Psoas muscle (tissue), 8 donors: ENCODE measurements at regions of chr4 and their contacts with region 1.

Region 1: GRCh38 chr4:17810260-17811077 is at the starts of genes DCAF16 and NCAPG:
- DNase-seq: peak; percentile 99 to 100
- ATAC-seq: peak; percentile 99 to 100 (median 100)
- H3K4me3 ChIP-seq: peak within 1 kb of the TSS; percentile 88
- H3K27ac ChIP-seq: peak within 1 kb of the TSS; percentile 91
- H3K4me1 ChIP-seq: peaks cover 36% of the 10 kb centered on the region
- H3K27me3 ChIP-seq: no peaks in the 10 kb centered on the region
- CTCF ChIP-seq: no peak
- total RNA-seq, gene DCAF16: 10.4 to 14.8 (median 13.0) TPM
- total RNA-seq, gene NCAPG: 0.30 to 0.44 (median 0.41) TPM

Region 2: GRCh38 chr4:16801356-16801755 is 1009.1 kb before region 1 on chr4:
- intact Hi-C with region 1: no loop called
- DNase-seq: no peak
- ATAC-seq: no peak
- H3K4me3 ChIP-seq: no peak overlapping the region
- H3K27ac ChIP-seq: no peak overlapping the region
- H3K4me1 ChIP-seq: no peaks in the 10 kb centered on the region
- H3K27me3 ChIP-seq: no peaks in the 10 kb centered on the region
- CTCF ChIP-seq: no peak

Region 3: DNA sequence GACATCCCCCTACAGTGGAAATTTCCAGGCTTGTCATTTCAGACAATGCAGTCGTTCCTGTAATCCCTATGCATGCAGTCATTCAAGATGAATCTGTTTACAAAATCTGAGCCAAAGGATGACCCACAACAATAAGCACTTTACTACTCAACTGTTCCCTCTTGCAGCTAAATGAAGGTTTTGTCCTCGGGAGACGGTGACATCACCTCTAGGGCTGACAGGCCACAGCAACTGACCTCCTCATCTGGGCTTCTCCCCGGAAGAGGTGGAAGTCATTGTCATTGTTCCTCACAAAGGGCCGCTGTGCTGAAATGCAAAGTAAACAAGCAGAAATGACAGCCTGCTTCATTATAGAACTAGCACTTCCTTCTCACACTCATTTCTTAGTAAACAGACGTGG is 266.3 kb before region 1 on chr4:
- intact Hi-C with region 1: loop called (anchors 5 kb)
- DNase-seq: no peak
- ATAC-seq: no peak
- H3K4me3 ChIP-seq: no peak overlapping the region
- H3K27ac ChIP-seq: no peak overlapping the region
- H3K4me1 ChIP-seq: no peaks in the 10 kb centered on the region
- H3K27me3 ChIP-seq: no peaks in the 10 kb centered on the region
- CTCF ChIP-seq: no peak

Region 4: GRCh38 chr4:17576932-17577665 is 233.4 kb before region 1 on chr4 and contains the start of gene LAP3:
- intact Hi-C with region 1: loop called in 1 of 2 experiments (anchors 10 kb)
- DNase-seq: peak; percentile 97 to 99
- ATAC-seq: peak; percentile 98 to 99 (median 98)
- H3K4me3 ChIP-seq: peak within 1 kb of the TSS; percentile 78
- H3K27ac ChIP-seq: peak within 1 kb of the TSS; percentile 90
- H3K4me1 ChIP-seq: peaks cover 11% of the 10 kb centered on the region
- H3K27me3 ChIP-seq: no peaks in the 10 kb centered on the region
- CTCF ChIP-seq: no peak
- total RNA-seq, gene LAP3: 52.0 to 81.3 (median 66.2) TPM

Region 5: GRCh38 chr4:17614416-17615299 is 195.8 kb before region 1 on chr4 and contains the start of gene MED28:
- intact Hi-C with region 1: loop called in 1 of 2 experiments (anchors 5 kb)
- DNase-seq: peak; percentile 96 to 98
- ATAC-seq: peak; percentile 88 to 96 (median 92)
- H3K4me3 ChIP-seq: peak within 1 kb of the TSS; percentile 81
- H3K27ac ChIP-seq: peak within 1 kb of the TSS; percentile 90
- H3K4me1 ChIP-seq: peaks cover 46% of the 10 kb centered on the region
- H3K27me3 ChIP-seq: no peaks in the 10 kb centered on the region
- CTCF ChIP-seq: no peak
- total RNA-seq, gene MED28: 27.2 to 58.3 (median 44.0) TPM

Region 6: GRCh38 chr4:17636696-17637622 is 173.5 kb before region 1 on chr4:
- intact Hi-C with region 1: loop called in 1 of 2 experiments (anchors 5 kb)
- DNase-seq: peak; percentile 78 to 89
- ATAC-seq: peak; percentile 81 to 88 (median 84)
- H3K4me3 ChIP-seq: no peak overlapping the region
- H3K27ac ChIP-seq: no peak overlapping the region
- H3K4me1 ChIP-seq: no peaks in the 10 kb centered on the region
- H3K27me3 ChIP-seq: no peaks in the 10 kb centered on the region
- CTCF ChIP-seq: peak; percentile 92

Region 7: DNA sequence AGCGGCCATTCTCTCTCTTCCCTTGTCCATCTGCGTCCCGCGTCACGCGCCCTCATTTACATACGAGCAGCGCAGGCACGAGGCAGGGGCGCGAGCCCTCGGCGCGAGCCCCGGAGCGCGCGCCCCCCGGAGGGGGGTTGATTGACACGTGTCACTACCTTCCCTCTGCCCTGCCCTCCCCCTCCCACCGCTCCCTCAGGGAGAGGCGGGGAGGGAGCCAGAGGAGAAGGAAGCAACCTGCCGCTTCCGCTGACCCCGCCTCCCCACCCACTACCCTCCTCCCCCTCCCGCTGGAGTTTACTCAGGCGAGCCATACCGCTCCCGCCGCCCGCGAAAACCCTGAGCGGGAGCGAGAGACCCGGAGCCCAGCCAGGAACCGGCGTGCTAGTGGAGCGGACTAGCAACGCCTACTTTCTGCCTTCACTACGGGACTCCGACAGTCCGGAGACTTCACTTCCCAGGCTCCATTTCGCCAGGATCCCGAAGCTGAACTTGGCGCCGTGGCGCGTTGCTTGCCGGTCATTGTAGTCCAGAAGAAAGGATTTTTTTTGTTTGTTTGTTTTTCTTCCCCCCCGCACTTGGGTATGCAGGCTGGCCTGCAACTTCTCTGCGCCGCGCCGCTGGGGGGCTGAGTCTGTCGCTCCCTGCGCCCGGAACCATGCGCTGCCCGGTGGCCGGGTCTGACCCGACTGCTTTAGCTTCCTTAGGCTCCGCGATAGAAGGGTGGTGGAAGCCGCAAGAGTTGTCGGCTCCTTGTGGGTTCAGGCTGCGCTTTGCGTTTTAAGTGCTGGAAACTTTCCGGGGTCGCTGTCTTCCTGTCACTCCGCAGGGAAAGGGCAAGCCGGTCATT is 211.5 kb after region 1 on chr4 and contains the start of gene LCORL:
- intact Hi-C with region 1: loop called (anchors 5 kb)
- DNase-seq: peak; percentile 92 to 96
- ATAC-seq: peak; percentile 93 to 95 (median 93)
- H3K4me3 ChIP-seq: peak within 1 kb of the TSS; percentile 92
- H3K27ac ChIP-seq: peak within 1 kb of the TSS; percentile 94
- H3K4me1 ChIP-seq: peaks cover 15% of the 10 kb centered on the region
- H3K27me3 ChIP-seq: no peaks in the 10 kb centered on the region
- CTCF ChIP-seq: peak; percentile 22
- total RNA-seq, gene LCORL: 5.3 to 7.5 (median 7.3) TPM

Region 8: DNA sequence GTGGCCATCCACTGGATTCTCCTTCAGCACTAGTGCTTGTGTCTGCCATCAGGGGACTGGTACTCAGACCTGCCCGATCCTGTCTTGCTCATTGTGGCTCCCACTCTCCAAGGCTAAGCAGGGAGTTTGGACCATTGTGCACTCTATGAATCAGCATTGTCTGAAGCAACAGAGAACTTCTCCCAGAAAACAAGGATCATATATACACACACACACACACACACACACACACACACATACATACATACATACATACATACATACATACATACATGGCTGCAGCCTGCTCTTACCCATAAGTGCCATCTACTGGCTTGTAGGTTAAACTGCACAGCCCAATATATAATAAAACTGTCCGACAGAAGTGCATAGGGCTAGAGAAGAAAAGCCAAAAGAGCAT is 556.4 kb after region 1 on chr4:
- intact Hi-C with region 1: loop called (anchors 10 kb)
- DNase-seq: no peak
- ATAC-seq: no peak
- H3K4me3 ChIP-seq: no peak overlapping the region
- H3K27ac ChIP-seq: no peak overlapping the region
- H3K4me1 ChIP-seq: no peaks in the 10 kb centered on the region
- H3K27me3 ChIP-seq: no peaks in the 10 kb centered on the region
- CTCF ChIP-seq: peak; percentile 30